Panc1 (cell line): ENCODE measurements at regions of chr19 and their contacts with region 1.

Region 1: GRCh38 chr19:10644260-10645007 is 9.7 kb upstream of the ILF3 start:
- DNase-seq: peak; percentile 27
- ATAC-seq: peak; percentile 97
- H3K4me3 ChIP-seq: no peak overlapping the region
- H3K27ac ChIP-seq: no peak overlapping the region
- H3K4me1 ChIP-seq: peaks cover 5% of the 10 kb centered on the region; the same call in 1 of the 2 replicates
- H3K27me3 ChIP-seq: no peaks in the 10 kb centered on the region
- CTCF ChIP-seq: peak; percentile 91

Region 2: DNA sequence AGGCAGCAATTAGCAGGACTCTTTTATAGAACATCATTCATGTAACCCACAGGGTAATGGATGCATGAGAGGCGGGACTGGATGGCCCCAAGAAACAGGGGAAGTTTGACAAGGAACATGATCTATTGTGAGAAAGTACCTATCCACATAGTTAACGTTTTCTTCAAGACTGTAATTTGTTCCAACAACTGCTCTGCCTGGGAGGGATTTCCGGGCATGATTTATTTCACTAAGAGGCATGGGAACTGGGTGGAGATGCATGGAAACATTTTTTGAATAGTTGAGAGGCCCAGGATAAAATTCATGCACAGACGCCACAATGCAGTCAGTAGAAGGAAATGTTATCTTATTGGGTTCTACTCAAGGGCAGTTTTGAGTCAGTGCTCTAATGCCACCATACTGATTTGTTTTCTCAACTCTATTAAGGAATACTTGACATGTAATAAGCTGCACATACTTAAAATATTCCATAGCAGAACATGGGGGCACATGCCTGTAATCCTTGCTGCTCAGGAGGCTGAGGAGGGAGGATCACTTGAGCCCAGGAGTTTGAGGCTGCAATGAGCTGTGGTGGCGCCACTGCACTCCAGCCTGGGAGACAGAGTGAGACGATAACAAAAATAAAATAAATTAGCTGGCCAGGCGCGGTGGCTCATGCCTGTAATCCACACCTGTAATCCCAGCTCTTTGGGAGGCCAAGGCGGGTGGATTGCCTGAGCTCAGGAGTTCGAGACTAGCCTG is 110.6 kb before region 1 on chr19:
- CTCF ChIA-PET with region 1: no interaction called
- POLR2A ChIA-PET with region 1: no interaction called
- in situ Hi-C with region 1: no loop called
- intact Hi-C with region 1: no loop called
- DNase-seq: no peak
- ATAC-seq: no peak
- H3K4me3 ChIP-seq: no peak overlapping the region
- H3K27ac ChIP-seq: no peak overlapping the region
- H3K4me1 ChIP-seq: no peaks in the 10 kb centered on the region
- H3K27me3 ChIP-seq: no peaks in the 10 kb centered on the region
- CTCF ChIP-seq: no peak

Region 3: GRCh38 chr19:10602330-10603083 is 41.9 kb before region 1 on chr19:
- CTCF ChIA-PET with region 1: interaction called, 13 read pairs
- POLR2A ChIA-PET with region 1: no interaction called
- in situ Hi-C with region 1: no loop called
- intact Hi-C with region 1: no loop called
- DNase-seq: no peak
- ATAC-seq: peak; percentile 98
- H3K4me3 ChIP-seq: peak overlapping the region; percentile 63 to 71
- H3K27ac ChIP-seq: peak overlapping the region; percentile 68
- H3K4me1 ChIP-seq: peaks cover 16% of the 10 kb centered on the region
- H3K27me3 ChIP-seq: no peaks in the 10 kb centered on the region
- CTCF ChIP-seq: no peak

Region 4: DNA sequence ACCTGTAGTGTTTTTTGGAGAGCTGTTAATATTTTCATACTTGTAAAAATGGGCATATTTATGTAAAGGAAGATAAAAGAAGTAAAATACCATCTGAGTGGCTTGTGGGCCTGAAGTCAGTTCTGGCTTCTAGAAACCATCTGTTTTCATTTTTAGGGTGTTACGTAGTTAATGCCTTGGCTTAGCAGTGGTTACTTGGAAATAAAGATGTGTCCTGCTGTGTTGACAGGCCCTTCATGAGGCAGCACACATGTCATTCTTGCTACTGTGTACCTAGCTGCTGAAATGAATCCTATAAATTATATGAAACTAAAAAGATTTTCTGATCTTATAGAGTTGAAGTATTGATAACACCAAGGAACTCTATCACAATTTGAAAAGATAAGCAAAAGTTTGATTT is 25.7 kb after region 1 on chr19:
- CTCF ChIA-PET with region 1: no interaction called
- POLR2A ChIA-PET with region 1: no interaction called
- in situ Hi-C with region 1: no loop called
- intact Hi-C with region 1: no loop called
- DNase-seq: no peak
- ATAC-seq: no peak
- H3K4me3 ChIP-seq: no peak overlapping the region
- H3K27ac ChIP-seq: no peak overlapping the region
- H3K4me1 ChIP-seq: peaks cover 3% of the 10 kb centered on the region; the same call in 1 of the 2 replicates
- H3K27me3 ChIP-seq: no peaks in the 10 kb centered on the region
- CTCF ChIP-seq: no peak

Region 5: GRCh38 chr19:10695401-10696398 is 51.3 kb after region 1 on chr19:
- CTCF ChIA-PET with region 1: interaction called, 10 read pairs
- POLR2A ChIA-PET with region 1: interaction called, 3 read pairs
- in situ Hi-C with region 1: no loop called
- intact Hi-C with region 1: no loop called
- DNase-seq: no peak
- ATAC-seq: peak; percentile 95
- H3K4me3 ChIP-seq: peak overlapping the region; percentile 21 to 40
- H3K27ac ChIP-seq: no peak overlapping the region
- H3K4me1 ChIP-seq: peaks cover 4% of the 10 kb centered on the region
- H3K27me3 ChIP-seq: no peaks in the 10 kb centered on the region
- CTCF ChIP-seq: no peak

Region 6: GRCh38 chr19:10701955-10702525 is 57.6 kb after region 1 on chr19:
- CTCF ChIA-PET with region 1: interaction called, 10 read pairs
- POLR2A ChIA-PET with region 1: no interaction called
- in situ Hi-C with region 1: no loop called
- intact Hi-C with region 1: no loop called
- DNase-seq: no peak
- ATAC-seq: peak; percentile 47
- H3K4me3 ChIP-seq: peak overlapping the region; percentile 81 to 83
- H3K27ac ChIP-seq: peak overlapping the region; percentile 83
- H3K4me1 ChIP-seq: no peaks in the 10 kb centered on the region; the same call in none of the 2 replicates
- H3K27me3 ChIP-seq: no peaks in the 10 kb centered on the region
- CTCF ChIP-seq: no peak; the same call in 1 of the 2 replicates

Region 7: GRCh38 chr19:10730923-10731322 is 86.5 kb after region 1 on chr19:
- CTCF ChIA-PET with region 1: no interaction called
- POLR2A ChIA-PET with region 1: no interaction called
- in situ Hi-C with region 1: no loop called
- intact Hi-C with region 1: no loop called
- DNase-seq: no peak
- ATAC-seq: 0 out of 2 replicates have a peak, but pooled peaks have one; percentile 43
- H3K4me3 ChIP-seq: no peak overlapping the region
- H3K27ac ChIP-seq: no peak overlapping the region
- H3K4me1 ChIP-seq: no peaks in the 10 kb centered on the region
- H3K27me3 ChIP-seq: no peaks in the 10 kb centered on the region
- CTCF ChIP-seq: no peak